RWPE1 (cell line): ENCODE measurements at regions of chr4 and their contacts with region 1.

Region 1: DNA sequence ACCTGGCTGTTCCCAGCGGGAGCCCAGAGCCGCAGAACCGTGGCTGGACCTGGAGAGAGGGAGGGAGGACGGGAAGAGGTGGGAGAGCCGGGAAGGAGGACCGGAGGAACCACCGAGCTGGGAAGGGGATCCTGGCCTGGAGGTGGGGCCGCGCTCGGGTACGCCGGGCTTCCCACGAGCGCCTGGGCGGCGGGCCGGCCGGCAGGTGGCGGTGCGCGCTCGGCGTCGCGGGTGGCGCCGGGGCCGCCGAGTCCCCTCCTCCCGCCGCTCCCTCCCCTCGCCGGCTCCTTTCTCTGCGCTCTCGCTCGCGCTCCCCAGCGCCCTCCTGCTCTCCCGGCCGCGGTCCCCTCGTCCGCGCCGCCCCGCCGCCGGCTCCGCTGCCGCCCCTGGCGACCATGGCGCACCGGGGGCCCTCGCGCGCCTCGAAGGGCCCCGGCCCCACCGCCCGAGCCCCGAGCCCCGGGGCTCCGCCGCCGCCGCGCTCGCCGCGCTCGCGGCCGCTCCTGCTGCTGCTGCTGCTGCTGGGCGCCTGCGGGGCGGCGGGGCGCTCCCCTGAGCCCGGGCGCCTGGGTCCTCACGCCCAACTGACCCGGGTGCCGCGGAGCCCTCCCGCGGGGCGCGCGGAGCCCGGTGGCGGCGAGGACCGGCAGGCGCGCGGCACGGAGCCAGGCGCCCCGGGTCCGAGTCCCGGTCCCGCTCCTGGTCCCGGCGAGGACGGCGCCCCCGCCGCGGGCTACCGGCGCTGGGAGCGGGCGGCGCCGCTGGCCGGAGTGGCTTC is at the start of gene SORCS2:
- DNase-seq: peak; percentile 58
- H3K27ac ChIP-seq: peak within 1 kb of the TSS; percentile 12; the same call in 1 of the 2 replicates
- CTCF ChIP-seq: peak; percentile 86

Region 2: DNA sequence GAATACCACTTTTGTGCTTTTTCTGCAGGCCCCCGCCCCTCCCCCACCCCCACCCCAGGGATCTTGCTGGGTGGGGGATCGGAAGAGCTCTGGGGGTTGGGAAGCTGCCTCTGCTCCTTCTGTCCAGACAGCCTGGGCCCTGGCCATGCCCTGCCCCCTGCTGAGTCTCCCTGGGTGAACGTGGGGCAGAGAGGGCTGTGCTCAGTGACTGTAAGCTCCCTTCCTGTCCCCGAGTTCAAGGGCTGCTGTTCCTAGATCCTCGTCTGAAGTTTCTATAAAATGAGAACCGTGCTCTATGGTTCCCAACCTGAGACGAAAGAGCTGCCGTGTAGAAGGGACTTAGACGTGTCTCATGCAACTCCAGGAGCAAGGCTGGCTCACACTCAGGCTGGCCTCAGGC is 104.9 kb after region 1 on chr4:
- CTCF ChIA-PET with region 1: interaction called, 12 read pairs
- POLR2A ChIA-PET with region 1: no interaction called
- DNase-seq: no peak
- H3K27ac ChIP-seq: no peak overlapping the region
- CTCF ChIP-seq: no peak